Left ventricle myocardium inferior (tissue), 1 donor: ENCODE measurements at regions of chr10 and their contacts with region 1.

Region 1: DNA sequence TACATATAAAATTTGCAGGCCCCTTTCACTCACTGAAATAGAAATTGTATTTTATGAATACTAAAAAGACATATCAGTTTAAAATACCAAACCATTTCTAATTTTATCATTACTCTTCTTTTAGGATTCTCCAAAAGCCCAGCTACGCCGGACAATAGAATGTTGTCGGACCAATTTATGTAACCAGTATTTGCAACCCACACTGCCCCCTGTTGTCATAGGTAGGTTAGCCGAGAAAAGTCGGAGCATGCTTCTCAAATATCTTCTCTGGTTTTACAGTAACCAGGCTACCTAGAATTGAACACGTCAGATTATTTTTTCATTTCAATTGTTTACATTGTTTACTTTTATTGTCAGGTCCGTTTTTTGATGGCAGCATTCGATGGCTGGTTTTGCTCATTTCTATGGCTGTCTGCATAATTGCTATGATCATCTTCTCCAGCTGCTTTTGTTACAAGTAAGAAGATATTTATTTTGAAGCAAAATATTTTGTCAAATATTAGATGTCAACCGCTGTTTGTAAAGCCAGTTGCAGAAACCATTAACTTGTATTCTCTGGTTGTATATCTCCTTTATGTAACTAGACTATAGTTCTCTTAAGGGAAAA is 57.6 kb downstream of the MMRN2 start:
- DNase-seq: peak; percentile 20
- H3K4me3 ChIP-seq: no peak overlapping the region
- H3K27ac ChIP-seq: peak overlapping the region; percentile 78
- H3K4me1 ChIP-seq: peaks cover 37% of the 10 kb centered on the region
- H3K27me3 ChIP-seq: peaks cover 4% of the 10 kb centered on the region
- CTCF ChIP-seq: peak; percentile 80

Region 2: GRCh38 chr10:86635402-86635801 is 264.4 kb before region 1 on chr10:
- intact Hi-C with region 1: loop called (anchors 5 kb)
- DNase-seq: no peak
- H3K4me3 ChIP-seq: no peak overlapping the region
- H3K27ac ChIP-seq: no peak overlapping the region
- H3K4me1 ChIP-seq: peaks cover 23% of the 10 kb centered on the region
- H3K27me3 ChIP-seq: peaks cover 43% of the 10 kb centered on the region
- CTCF ChIP-seq: no peak

Region 3: DNA sequence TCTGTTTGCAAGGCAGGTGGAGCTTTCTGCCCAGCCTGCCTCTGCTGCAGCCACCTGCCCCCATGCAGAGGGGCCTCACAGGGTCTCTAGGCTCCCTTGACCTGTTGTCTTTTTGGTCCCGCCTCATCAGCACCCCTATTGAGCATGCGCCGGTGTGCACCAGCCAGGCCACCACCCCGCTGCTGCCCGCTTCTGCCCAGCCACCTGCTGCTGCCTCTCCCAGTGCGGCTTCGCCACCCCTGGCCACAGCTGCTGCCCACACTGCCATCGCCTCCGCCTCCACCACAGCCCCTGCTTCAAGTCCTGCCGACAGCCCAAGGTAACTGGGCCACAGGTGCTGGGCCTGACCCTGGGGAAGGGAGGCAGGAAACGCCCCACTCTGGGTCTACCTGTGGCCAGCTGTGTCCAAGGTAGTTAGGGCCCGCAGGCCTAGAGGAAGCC is 193.4 kb before region 1 on chr10:
- intact Hi-C with region 1: loop called (anchors 10 kb)
- DNase-seq: no peak
- H3K4me3 ChIP-seq: no peak overlapping the region
- H3K27ac ChIP-seq: peak overlapping the region; percentile 65
- H3K4me1 ChIP-seq: peaks cover 73% of the 10 kb centered on the region
- H3K27me3 ChIP-seq: peaks cover 31% of the 10 kb centered on the region
- CTCF ChIP-seq: no peak